AG04449 (cell line): ENCODE measurements at regions of chr20 and their contacts with region 1.

Region 1: DNA sequence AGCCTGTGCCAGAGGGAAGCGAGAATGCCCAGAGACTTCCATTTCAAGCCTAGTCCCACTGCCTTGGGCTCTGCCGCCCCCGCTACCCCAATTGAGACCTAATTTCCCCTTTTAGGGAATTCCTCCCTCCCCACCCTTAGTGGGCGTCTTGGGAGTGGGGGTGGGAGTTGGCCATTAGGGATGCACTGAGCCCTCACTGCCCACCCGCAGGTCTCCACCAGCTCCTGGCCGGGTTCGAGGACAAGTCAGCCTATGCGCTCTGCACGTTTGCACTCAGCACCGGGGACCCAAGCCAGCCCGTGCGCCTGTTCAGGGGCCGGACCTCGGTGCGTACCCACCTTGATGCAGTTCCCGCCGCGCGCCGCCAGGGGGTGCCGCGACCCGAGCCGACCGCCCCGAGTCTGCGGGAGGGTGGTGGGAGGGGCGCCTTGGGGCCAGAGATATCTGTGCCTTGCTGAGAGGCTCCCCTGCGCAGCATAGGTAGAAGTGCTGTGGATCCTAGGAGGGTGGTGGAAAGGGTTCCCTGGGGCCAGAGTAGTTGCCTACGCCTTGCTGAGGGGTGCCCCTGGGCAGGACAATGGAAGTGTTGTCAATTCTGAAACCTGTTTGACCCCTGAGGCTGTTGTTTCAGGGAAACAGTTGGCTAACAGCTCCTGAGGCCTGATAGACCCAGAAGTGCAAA is 9.2 kb downstream of the ITPA start:
- DNase-seq: no peak
- H3K4me3 ChIP-seq: no peak overlapping the region
- CTCF ChIP-seq: peak; percentile 95

Region 2: DNA sequence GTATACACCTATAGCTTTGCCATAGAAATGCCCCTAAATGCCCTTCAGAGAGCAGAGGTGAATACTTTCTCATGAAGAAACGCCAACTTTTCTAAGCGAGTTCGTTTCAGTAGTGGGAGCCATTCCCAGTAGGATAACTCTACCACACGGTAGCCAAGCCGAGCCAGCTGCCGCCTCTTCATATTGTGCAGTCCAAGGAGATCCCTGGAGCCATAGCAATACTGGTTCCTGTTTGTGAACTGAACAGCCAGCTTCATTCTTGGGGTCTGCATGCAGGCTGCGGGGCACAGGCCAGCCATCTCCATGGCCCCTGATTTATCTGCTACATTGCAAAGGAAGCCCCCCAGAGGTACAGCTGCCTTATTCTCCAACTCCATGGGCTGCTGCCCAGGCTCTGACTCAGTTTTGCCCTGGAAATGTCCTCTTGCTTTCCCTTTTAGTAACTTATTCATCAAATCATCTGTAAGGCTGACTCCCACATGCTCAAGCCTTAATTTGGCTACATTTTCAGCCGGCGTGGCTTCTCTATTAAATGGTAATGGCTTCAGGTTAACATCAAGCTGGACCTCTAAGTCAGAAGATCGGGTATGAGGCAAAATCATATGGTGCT is 71.6 kb before region 1 on chr20:
- CTCF ChIA-PET with region 1: no interaction called
- POLR2A ChIA-PET with region 1: no interaction called
- DNase-seq: no peak
- H3K4me3 ChIP-seq: no peak overlapping the region
- CTCF ChIP-seq: no peak

Region 3: GRCh38 chr20:3250091-3250504 is 31.6 kb after region 1 on chr20:
- CTCF ChIA-PET with region 1: interaction called, 11 read pairs
- POLR2A ChIA-PET with region 1: no interaction called
- DNase-seq: no peak
- H3K4me3 ChIP-seq: no peak overlapping the region
- CTCF ChIP-seq: peak; percentile 17

Region 4: GRCh38 chr20:3276680-3277015 is 58.2 kb after region 1 on chr20:
- CTCF ChIA-PET with region 1: interaction called, 19 read pairs
- POLR2A ChIA-PET with region 1: no interaction called
- DNase-seq: no peak
- H3K4me3 ChIP-seq: no peak overlapping the region
- CTCF ChIP-seq: no peak

Region 5: GRCh38 chr20:3312940-3313682 is 94.7 kb after region 1 on chr20:
- CTCF ChIA-PET with region 1: interaction called, 45 read pairs
- POLR2A ChIA-PET with region 1: no interaction called
- DNase-seq: peak; percentile 41
- H3K4me3 ChIP-seq: no peak overlapping the region
- CTCF ChIP-seq: no peak